ENCODE measurements at regions of chr3 and their contacts with region 1.

Region 1: DNA sequence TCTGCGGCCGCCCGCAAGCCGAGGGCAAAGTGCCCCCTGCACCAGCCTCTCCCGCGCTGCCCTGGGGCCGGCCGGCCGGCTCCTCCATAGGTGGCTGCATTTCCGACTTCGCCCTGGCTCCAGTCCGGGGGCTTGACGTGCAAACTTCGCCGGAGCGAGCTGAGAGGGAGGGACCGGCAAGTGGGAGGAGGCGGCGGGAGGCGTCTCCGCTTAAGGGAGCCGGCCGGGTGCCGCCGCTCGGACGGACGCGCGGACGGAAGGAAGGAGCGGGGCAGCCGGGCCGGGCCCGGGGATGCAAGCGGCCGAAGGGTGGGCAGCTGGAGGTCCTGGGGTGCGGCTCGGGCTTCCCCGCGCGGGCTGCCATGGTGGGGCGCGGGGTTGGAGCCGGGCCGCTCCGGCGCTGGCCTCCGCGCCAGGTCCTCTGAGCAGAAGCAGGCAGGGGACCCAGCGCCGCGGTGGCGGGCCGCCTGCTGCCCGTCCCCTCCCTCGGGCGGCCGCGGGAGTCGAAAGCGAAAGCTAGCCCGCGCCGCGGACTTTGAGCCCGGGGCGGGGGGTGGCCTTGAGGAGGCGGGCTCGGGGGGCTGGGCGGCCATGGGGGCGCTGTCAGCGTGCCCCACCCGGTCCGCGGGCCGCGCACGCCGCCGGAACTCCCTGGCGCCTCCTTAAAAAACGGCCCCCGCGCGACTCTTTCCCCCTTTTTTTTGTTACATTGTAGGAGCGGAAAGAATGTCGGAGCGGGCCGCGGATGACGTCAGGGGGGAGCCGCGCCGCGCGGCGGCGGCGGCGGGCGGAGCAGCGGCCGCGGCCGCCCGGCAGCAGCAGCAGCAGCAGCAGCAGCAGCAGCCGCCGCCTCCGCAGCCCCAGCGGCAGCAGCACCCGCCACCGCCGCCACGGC is at the start of gene SCAANT1:
- DNase-seq: peak; percentile 89
- ATAC-seq: peak; percentile 70
- H3K4me3 ChIP-seq: peak within 1 kb of the TSS; percentile 54 to 73 (median 63)
- H3K4me3 Mint-ChIP-seq: peak within 1 kb of the TSS; percentile 95
- H3K27ac ChIP-seq: peak within 1 kb of the TSS; percentile 70 to 87
- H3K27ac Mint-ChIP-seq: peak within 1 kb of the TSS; percentile 97
- H3K4me1 ChIP-seq: peaks cover 17 to 25% of the 10 kb centered on the region in 2 donors
- H3K4me1 Mint-ChIP-seq: peaks cover 28% of the 10 kb centered on the region
- H3K27me3 ChIP-seq: no peaks in the 10 kb centered on the region
- H3K27me3 Mint-ChIP-seq: no peaks in the 10 kb centered on the region
- CTCF ChIP-seq: no peak
- total RNA-seq, gene SCAANT1: 1.7 TPM in 1 of 2 replicates, not detected in the other

Region 2: GRCh38 chr3:63643882-63644797 is 268.0 kb before region 1 on chr3:
- CTCF ChIA-PET with region 1: no interaction called
- POLR2A ChIA-PET with region 1: no interaction called
- intact Hi-C with region 1: no loop called
- DNase-seq: no peak
- ATAC-seq: no peak
- H3K4me3 ChIP-seq: no peak overlapping the region
- H3K4me3 Mint-ChIP-seq: no peak overlapping the region
- H3K27ac ChIP-seq: no peak overlapping the region
- H3K27ac Mint-ChIP-seq: no peak overlapping the region
- H3K4me1 ChIP-seq: no peaks in the 10 kb centered on the region
- H3K4me1 Mint-ChIP-seq: no peaks in the 10 kb centered on the region
- H3K27me3 ChIP-seq: no peaks in the 10 kb centered on the region
- H3K27me3 Mint-ChIP-seq: peaks cover 8% of the 10 kb centered on the region
- CTCF ChIP-seq: no peak

Region 3: GRCh38 chr3:63791974-63792545 is 120.1 kb before region 1 on chr3:
- CTCF ChIA-PET with region 1: no interaction called
- POLR2A ChIA-PET with region 1: no interaction called
- intact Hi-C with region 1: no loop called
- DNase-seq: no peak
- ATAC-seq: no peak
- H3K4me3 ChIP-seq: no peak overlapping the region
- H3K4me3 Mint-ChIP-seq: no peak overlapping the region
- H3K27ac ChIP-seq: no peak overlapping the region
- H3K27ac Mint-ChIP-seq: no peak overlapping the region
- H3K4me1 ChIP-seq: no peaks in the 10 kb centered on the region
- H3K4me1 Mint-ChIP-seq: no peaks in the 10 kb centered on the region
- H3K27me3 ChIP-seq: peaks cover 0 to 4% (median 0%) of the 10 kb centered on the region in 4 experiments
- H3K27me3 Mint-ChIP-seq: peaks cover 10% of the 10 kb centered on the region
- CTCF ChIP-seq: no peak

Region 4: DNA sequence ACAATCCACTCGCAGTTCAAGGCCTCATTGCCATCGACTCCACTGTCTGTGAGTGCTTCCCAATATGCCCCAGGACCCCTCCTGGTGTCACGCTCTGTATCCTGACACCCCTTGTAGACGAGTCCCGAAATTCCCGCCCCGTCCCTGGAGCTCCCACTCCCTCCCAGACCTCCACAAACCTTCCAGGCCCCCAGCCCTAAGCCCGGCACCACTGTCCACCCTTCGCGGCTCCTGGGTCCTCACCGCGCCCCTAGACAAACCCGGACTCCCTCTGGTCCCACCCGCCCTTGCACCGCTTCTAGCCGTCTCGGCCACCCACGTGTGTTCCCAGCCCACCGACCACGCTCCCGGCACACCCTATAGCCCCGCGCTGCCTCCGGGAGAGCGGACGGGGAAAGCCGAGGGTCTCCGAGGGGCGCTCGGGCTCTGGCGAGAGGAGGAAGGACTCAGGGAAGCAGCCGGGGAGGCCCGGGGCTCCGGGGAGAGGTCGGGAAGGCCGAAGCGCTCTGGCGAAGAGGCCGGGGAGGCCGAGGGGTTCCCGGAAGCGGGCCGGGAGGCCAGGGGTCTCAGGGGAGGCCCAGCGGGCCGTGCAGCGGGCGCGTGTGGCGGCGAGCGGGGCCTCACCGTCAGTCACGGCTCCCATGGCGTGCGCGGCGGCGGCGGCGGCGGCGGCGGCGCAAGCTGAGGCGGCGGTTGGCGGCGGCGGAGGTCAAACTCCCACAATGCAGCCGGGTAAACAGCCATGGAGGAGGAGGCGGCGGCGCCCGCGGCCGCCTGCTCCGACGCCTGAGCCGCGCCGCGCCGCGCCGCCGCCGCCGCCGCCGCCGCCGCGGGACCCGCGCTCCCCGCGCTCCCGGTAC is 48.7 kb before region 1 on chr3 and contains the starts of genes ATXN7 and THOC7:
- CTCF ChIA-PET with region 1: interaction called, 5 read pairs
- POLR2A ChIA-PET with region 1: interaction called, 6 read pairs
- intact Hi-C with region 1: loop called (anchors 1 kb)
- DNase-seq: peak; percentile 87
- ATAC-seq: peak; percentile 77
- H3K4me3 ChIP-seq: peak within 1 kb of the TSS; percentile 58 to 96 (median 84)
- H3K4me3 Mint-ChIP-seq: peak within 1 kb of the TSS; percentile 97
- H3K27ac ChIP-seq: peak within 1 kb of the TSS; percentile 64 to 88
- H3K27ac Mint-ChIP-seq: peak within 1 kb of the TSS; percentile 97
- H3K4me1 ChIP-seq: peaks cover 16 to 19% of the 10 kb centered on the region in 2 donors
- H3K4me1 Mint-ChIP-seq: peaks cover 55% of the 10 kb centered on the region
- H3K27me3 ChIP-seq: no peaks in the 10 kb centered on the region
- H3K27me3 Mint-ChIP-seq: no peaks in the 10 kb centered on the region
- CTCF ChIP-seq: no peak
- total RNA-seq, gene ATXN7: 74.3 and 74.7 TPM in 2 replicates
- total RNA-seq, gene THOC7: 30.5 and 31.5 TPM in 2 replicates

Region 5: GRCh38 chr3:63927422-63928280 is 15.5 kb after region 1 on chr3:
- CTCF ChIA-PET with region 1: interaction called, 8 read pairs
- POLR2A ChIA-PET with region 1: interaction called, 8 read pairs
- intact Hi-C with region 1: loop called (anchors 1 kb)
- DNase-seq: peak; percentile 68
- ATAC-seq: peak; percentile 91
- H3K4me3 ChIP-seq: peak overlapping the region in 1 of 5 experiments; percentile 11
- H3K4me3 Mint-ChIP-seq: peak overlapping the region; percentile 33
- H3K27ac ChIP-seq: peak overlapping the region; percentile 33 to 76
- H3K27ac Mint-ChIP-seq: peak overlapping the region; percentile 84
- H3K4me1 ChIP-seq: peaks cover 58 to 63% of the 10 kb centered on the region in 2 donors
- H3K4me1 Mint-ChIP-seq: peaks cover 80% of the 10 kb centered on the region
- H3K27me3 ChIP-seq: no peaks in the 10 kb centered on the region
- H3K27me3 Mint-ChIP-seq: no peaks in the 10 kb centered on the region
- CTCF ChIP-seq: no peak

Measured in B cell (primary cell).